Naive thymus-derived CD4-positive, alpha-beta T cell (primary cell): ENCODE measurements at regions of chr7 and their contacts with region 1.

Region 1: GRCh38 chr7:140230861-140231770 is 54.3 kb upstream of the KDM7A start:
- DNase-seq: peak; percentile 13 to 73 (median 44)
- ATAC-seq: peak; percentile 30
- H3K4me3 ChIP-seq: peak overlapping the region; percentile 95
- H3K4me3 Mint-ChIP-seq: peak overlapping the region; percentile 84 to 99 (median 96)
- H3K27ac ChIP-seq: peak overlapping the region; percentile 91
- H3K27ac Mint-ChIP-seq: peak overlapping the region; percentile 95 to 100 (median 99)
- H3K4me1 ChIP-seq: peaks cover 16 to 21% of the 10 kb centered on the region in 2 donors
- H3K4me1 Mint-ChIP-seq: peaks cover 24 to 56% (median 51%) of the 10 kb centered on the region in 7 donors
- H3K27me3 ChIP-seq: no peaks in the 10 kb centered on the region
- H3K27me3 Mint-ChIP-seq: peaks cover 0 to 2% (median 0%) of the 10 kb centered on the region in 5 donors

Region 2: GRCh38 chr7:139109188-139109982 is 1121.7 kb before region 1 on chr7 and contains the start of gene ZC3HAV1:
- CTCF ChIA-PET with region 1: no interaction called
- POLR2A ChIA-PET with region 1: no interaction called
- intact Hi-C with region 1: loop called in 1 of 2 experiments (anchors 10 kb)
- DNase-seq: peak; percentile 68 to 94 (median 90)
- ATAC-seq: peak; percentile 91
- H3K4me3 ChIP-seq: peak within 1 kb of the TSS; percentile 80
- H3K4me3 Mint-ChIP-seq: peak within 1 kb of the TSS; percentile 92 to 100 (median 98)
- H3K27ac ChIP-seq: peak within 1 kb of the TSS; percentile 93
- H3K27ac Mint-ChIP-seq: peak within 1 kb of the TSS; percentile 96 to 100 (median 98)
- H3K4me1 ChIP-seq: peaks cover 13 to 22% of the 10 kb centered on the region in 2 donors
- H3K4me1 Mint-ChIP-seq: peaks cover 24 to 49% (median 42%) of the 10 kb centered on the region in 7 donors
- H3K27me3 ChIP-seq: no peaks in the 10 kb centered on the region
- H3K27me3 Mint-ChIP-seq: no peaks in the 10 kb centered on the region
- total RNA-seq, gene ZC3HAV1: 129 to 181 (median 152) TPM

Region 3: GRCh38 chr7:139777948-139778841 is 452.9 kb before region 1 on chr7 and contains the start of gene HIPK2:
- CTCF ChIA-PET with region 1: no interaction called
- POLR2A ChIA-PET with region 1: no interaction called
- intact Hi-C with region 1: loop called (anchors 5 kb)
- DNase-seq: peak; percentile 54 to 75 (median 67)
- ATAC-seq: peak; percentile 79
- H3K4me3 ChIP-seq: peak within 1 kb of the TSS; percentile 85
- H3K4me3 Mint-ChIP-seq: peak within 1 kb of the TSS; percentile 94 to 100 (median 98)
- H3K27ac ChIP-seq: peak within 1 kb of the TSS; percentile 89
- H3K27ac Mint-ChIP-seq: peak within 1 kb of the TSS; percentile 95 to 98 (median 97)
- H3K4me1 ChIP-seq: peaks cover 4 to 26% of the 10 kb centered on the region in 2 donors
- H3K4me1 Mint-ChIP-seq: peaks cover 41 to 53% (median 49%) of the 10 kb centered on the region in 7 donors
- H3K27me3 ChIP-seq: no peaks in the 10 kb centered on the region
- H3K27me3 Mint-ChIP-seq: peaks cover 0 to 24% (median 5%) of the 10 kb centered on the region in 5 donors
- total RNA-seq, gene HIPK2: 27.3 to 44.0 (median 37.3) TPM

Region 4: GRCh38 chr7:140165422-140165821 is 65.7 kb before region 1 on chr7:
- CTCF ChIA-PET with region 1: no interaction called
- POLR2A ChIA-PET with region 1: interaction called, 10 read pairs
- intact Hi-C with region 1: no loop called
- DNase-seq: no peak
- ATAC-seq: no peak
- H3K4me3 ChIP-seq: no peak overlapping the region
- H3K4me3 Mint-ChIP-seq: peak overlapping the region in 8 of 10 donors; percentile 12 to 76 (median 40)
- H3K27ac ChIP-seq: no peak overlapping the region
- H3K27ac Mint-ChIP-seq: peak overlapping the region in 2 of 9 donors; percentile 21 to 46
- H3K4me1 ChIP-seq: peaks cover 13 to 44% of the 10 kb centered on the region in 2 donors
- H3K4me1 Mint-ChIP-seq: peaks cover 34 to 97% (median 84%) of the 10 kb centered on the region in 7 donors
- H3K27me3 ChIP-seq: no peaks in the 10 kb centered on the region
- H3K27me3 Mint-ChIP-seq: no peaks in the 10 kb centered on the region

Region 5: GRCh38 chr7:140260352-140261104 is 29.4 kb after region 1 on chr7:
- CTCF ChIA-PET with region 1: interaction called, 8 read pairs
- POLR2A ChIA-PET with region 1: interaction called, 36 read pairs
- intact Hi-C with region 1: loop called (anchors 1 to 2 kb)
- DNase-seq: no peak
- ATAC-seq: no peak
- H3K4me3 ChIP-seq: no peak overlapping the region
- H3K4me3 Mint-ChIP-seq: peak overlapping the region in 1 of 10 donors; percentile 7
- H3K27ac ChIP-seq: no peak overlapping the region
- H3K27ac Mint-ChIP-seq: peak overlapping the region in 5 of 9 donors; percentile 41 to 89 (median 74)
- H3K4me1 ChIP-seq: peaks cover 18 to 29% of the 10 kb centered on the region in 2 donors
- H3K4me1 Mint-ChIP-seq: peaks cover 29 to 58% (median 47%) of the 10 kb centered on the region in 7 donors
- H3K27me3 ChIP-seq: no peaks in the 10 kb centered on the region
- H3K27me3 Mint-ChIP-seq: peaks cover 0 to 4% (median 0%) of the 10 kb centered on the region in 5 donors

Region 6: DNA sequence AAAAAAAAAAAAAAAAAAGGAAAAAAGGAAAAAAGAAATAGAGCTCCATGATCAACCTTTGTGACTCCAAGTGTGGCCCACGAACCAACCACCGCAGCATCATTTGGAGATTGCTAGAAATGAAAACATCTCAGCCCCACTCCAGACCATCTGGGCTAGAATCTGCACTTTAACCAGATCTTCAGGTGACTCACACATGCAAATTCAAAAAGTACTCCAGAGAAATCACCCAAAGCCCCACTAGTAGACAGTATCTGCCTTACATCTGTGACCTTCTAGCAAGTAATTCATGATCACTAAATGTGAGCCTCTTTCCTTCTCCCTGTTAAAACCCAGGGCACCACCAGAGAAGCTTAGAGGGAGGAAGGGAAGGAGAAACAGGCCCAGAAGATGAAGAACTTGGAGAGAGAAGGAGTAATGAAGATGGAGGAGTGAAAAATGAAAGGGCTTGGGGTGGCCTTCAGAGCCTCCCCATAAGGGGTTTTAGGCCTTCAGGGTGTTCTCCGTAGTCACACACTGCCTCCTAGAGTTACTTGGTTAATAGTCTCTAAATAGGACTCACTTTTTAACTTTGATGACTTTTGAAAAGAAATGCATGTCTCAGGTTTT is 73.2 kb after region 1 on chr7:
- CTCF ChIA-PET with region 1: no interaction called
- POLR2A ChIA-PET with region 1: interaction called, 9 read pairs
- intact Hi-C with region 1: loop called (anchors 1 kb)
- DNase-seq: peak in 8 of 9 donors; percentile 30 to 75 (median 58)
- ATAC-seq: peak; percentile 93
- H3K4me3 ChIP-seq: no peak overlapping the region
- H3K4me3 Mint-ChIP-seq: peak overlapping the region in 1 of 10 donors; percentile 12
- H3K27ac ChIP-seq: no peak overlapping the region
- H3K27ac Mint-ChIP-seq: peak overlapping the region; percentile 3 to 81 (median 62)
- H3K4me1 ChIP-seq: no peaks in the 10 kb centered on the region
- H3K4me1 Mint-ChIP-seq: peaks cover 0 to 7% (median 6%) of the 10 kb centered on the region in 7 donors
- H3K27me3 ChIP-seq: no peaks in the 10 kb centered on the region
- H3K27me3 Mint-ChIP-seq: no peaks in the 10 kb centered on the region